Activated CD8-positive, alpha-beta T cell treated with anti-CD3 and anti-CD28 coated beads, Interleukin-2, amount 10 ng/mL, durations not matched to agents 7 days and 5 days (primary cell): ENCODE measurements at regions of chr9 and their contacts with region 1.

Region 1: GRCh38 chr9:34252670-34253459 is 74.0 kb downstream of the UBAP1 start:
- DNase-seq: peak; percentile 72
- ATAC-seq: peak; percentile 66
- H3K4me3 Mint-ChIP-seq: no peak overlapping the region
- H3K27ac Mint-ChIP-seq: no peak overlapping the region
- H3K4me1 Mint-ChIP-seq: peaks cover 20% of the 10 kb centered on the region
- H3K27me3 Mint-ChIP-seq: no peaks in the 10 kb centered on the region

Region 2: GRCh38 chr9:33233681-33234473 is 1019.0 kb before region 1 on chr9:
- CTCF ChIA-PET with region 1: no interaction called
- POLR2A ChIA-PET with region 1: no interaction called
- DNase-seq: no peak
- ATAC-seq: no peak
- H3K4me3 Mint-ChIP-seq: no peak overlapping the region
- H3K27ac Mint-ChIP-seq: no peak overlapping the region
- H3K4me1 Mint-ChIP-seq: no peaks in the 10 kb centered on the region
- H3K27me3 Mint-ChIP-seq: peaks cover 10% of the 10 kb centered on the region

Region 3: GRCh38 chr9:34240006-34240405 is 12.9 kb before region 1 on chr9:
- CTCF ChIA-PET with region 1: interaction called, 14 read pairs
- POLR2A ChIA-PET with region 1: no interaction called
- DNase-seq: no peak
- ATAC-seq: no peak
- H3K4me3 Mint-ChIP-seq: no peak overlapping the region
- H3K27ac Mint-ChIP-seq: no peak overlapping the region
- H3K4me1 Mint-ChIP-seq: no peaks in the 10 kb centered on the region
- H3K27me3 Mint-ChIP-seq: no peaks in the 10 kb centered on the region

Region 4: DNA sequence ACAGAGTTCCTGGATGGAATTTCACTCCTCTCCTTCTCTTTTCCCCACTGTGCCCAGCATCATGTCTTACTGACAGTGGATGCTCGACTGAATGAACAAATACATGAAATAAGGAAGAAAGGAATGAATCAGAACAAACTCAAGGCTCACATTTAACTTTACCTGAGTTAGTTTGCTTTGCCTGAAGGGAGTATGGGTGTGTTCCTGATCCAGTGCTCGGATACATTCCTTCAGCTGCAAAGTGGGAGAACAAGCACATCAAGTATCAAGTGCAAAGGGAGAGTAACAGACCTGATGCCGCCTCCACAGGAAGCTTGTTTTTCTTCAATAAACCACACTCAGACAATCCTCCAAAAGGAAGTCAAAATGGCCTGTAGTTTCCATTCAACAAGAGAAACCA is 10.1 kb after region 1 on chr9:
- CTCF ChIA-PET with region 1: interaction called, 26 read pairs
- POLR2A ChIA-PET with region 1: no interaction called
- DNase-seq: no peak
- ATAC-seq: no peak
- H3K4me3 Mint-ChIP-seq: no peak overlapping the region
- H3K27ac Mint-ChIP-seq: peak overlapping the region; percentile 25
- H3K4me1 Mint-ChIP-seq: peaks cover 12% of the 10 kb centered on the region
- H3K27me3 Mint-ChIP-seq: no peaks in the 10 kb centered on the region

Region 5: GRCh38 chr9:34376596-34377403 is 123.9 kb after region 1 on chr9 and contains the start of gene MYORG:
- CTCF ChIA-PET with region 1: interaction called, 41 read pairs
- POLR2A ChIA-PET with region 1: no interaction called
- DNase-seq: peak; percentile 99
- ATAC-seq: peak; percentile 83
- H3K4me3 Mint-ChIP-seq: peak within 1 kb of the TSS; percentile 97
- H3K27ac Mint-ChIP-seq: peak within 1 kb of the TSS; percentile 90
- H3K4me1 Mint-ChIP-seq: peaks cover 54% of the 10 kb centered on the region
- H3K27me3 Mint-ChIP-seq: peaks cover 11% of the 10 kb centered on the region
- total RNA-seq, gene MYORG: 8.8 to 9.1 TPM

Region 6: DNA sequence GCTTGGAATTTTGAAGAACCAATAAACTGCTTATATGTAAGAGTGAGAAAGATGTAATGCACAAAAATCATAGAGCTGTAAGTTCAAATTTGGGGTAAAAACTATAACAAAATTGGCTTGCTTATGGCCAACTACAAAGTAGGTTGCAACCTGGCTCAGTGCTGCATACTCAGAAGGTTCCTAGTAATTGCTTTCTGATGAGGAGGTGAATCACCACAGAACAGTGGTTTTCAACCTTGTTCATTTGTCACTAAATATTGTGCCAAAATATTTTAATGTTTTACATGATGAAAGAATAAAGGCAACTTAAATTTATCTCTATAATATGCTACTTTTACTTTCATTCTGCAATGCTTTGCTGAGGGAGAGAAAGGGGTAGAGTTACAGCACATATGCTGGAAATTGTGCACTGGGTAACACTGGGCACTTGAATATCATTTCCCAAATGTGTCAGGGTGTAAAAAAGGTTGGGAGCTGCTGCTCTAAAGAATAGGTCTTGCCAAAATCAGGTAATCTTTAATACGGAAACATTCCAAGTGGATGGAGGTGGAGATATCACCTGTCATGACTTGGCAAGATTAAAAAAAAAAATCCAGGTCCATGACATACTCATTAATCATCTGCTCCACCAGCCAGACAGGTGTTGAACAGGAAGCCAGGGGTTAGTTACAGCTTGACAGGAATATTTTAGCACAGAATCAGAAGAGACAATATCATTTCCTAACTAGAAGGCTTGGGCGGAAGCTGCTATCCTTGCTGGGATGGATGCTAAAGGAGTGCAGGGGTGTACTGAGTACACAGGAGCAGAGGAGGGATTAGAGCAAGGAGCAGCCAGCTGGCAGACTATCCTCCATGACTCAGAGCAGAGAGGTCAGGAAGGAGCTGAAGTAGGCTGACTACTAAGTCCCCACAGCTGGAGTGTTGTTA is 491.7 kb after region 1 on chr9:
- CTCF ChIA-PET with region 1: no interaction called
- POLR2A ChIA-PET with region 1: no interaction called
- DNase-seq: no peak
- ATAC-seq: no peak
- H3K4me3 Mint-ChIP-seq: no peak overlapping the region
- H3K27ac Mint-ChIP-seq: no peak overlapping the region
- H3K4me1 Mint-ChIP-seq: peaks cover 4% of the 10 kb centered on the region
- H3K27me3 Mint-ChIP-seq: peaks cover 17% of the 10 kb centered on the region